ENCODE measurements at regions of chr19 and their contacts with region 1.

Region 1: GRCh38 chr19:9785367-9786331 is 17.1 kb upstream of the ZNF846 start:
- DNase-seq: peak; percentile 92
- H3K4me3 Mint-ChIP-seq: peak overlapping the region; percentile 88
- H3K27ac Mint-ChIP-seq: peak overlapping the region; percentile 86
- H3K4me1 Mint-ChIP-seq: peaks cover 22% of the 10 kb centered on the region
- H3K27me3 Mint-ChIP-seq: no peaks in the 10 kb centered on the region

Region 2: DNA sequence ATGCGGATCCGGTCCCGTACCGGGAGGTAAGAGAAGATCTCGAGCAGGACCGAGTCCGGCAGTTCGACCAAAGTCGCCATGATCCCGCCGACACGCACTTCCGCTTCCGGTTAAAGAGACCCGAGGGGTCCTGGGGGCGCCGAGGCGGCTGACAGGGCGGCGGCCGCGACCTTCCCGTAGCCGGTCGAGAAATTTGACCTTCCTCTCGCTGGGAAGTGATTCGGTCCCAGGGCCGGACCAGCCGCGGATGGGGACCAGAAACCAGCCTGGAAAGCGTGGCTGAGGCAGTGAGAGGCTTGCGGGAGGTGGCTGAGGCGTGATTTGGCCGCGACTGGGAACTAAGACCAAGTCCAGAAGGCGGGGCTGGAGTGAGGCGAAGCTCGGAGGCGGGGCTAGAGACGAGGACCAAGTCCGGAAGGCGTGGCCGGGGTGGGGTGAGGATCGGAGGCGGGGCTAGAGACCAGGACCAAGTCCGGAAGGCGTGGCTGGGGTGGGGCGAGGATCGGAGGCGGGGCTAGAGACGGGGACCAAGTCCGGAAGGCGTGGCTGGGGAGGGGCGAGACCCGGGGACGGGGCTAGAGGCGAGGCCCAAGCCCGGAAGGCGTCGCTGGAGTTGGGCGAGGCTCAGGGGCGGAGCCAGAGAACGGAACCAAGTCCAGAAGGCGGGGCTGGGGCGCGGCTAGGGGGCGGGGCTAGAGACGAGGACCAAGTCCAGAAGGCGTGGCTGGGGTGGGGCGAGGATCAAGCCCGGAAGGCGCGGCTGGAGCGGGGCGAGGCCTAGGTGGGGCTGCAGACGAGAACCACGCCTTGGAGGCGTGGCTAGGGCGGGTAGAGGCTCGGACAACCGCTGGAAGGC is 33.3 kb after region 1 on chr19 and contains the start of gene FBXL12:
- intact Hi-C with region 1: loop called (anchors 1 kb)
- DNase-seq: peak; percentile 100
- H3K4me3 Mint-ChIP-seq: peak within 1 kb of the TSS; percentile 90
- H3K27ac Mint-ChIP-seq: peak within 1 kb of the TSS; percentile 87
- H3K4me1 Mint-ChIP-seq: peaks cover 21% of the 10 kb centered on the region
- H3K27me3 Mint-ChIP-seq: no peaks in the 10 kb centered on the region
- total RNA-seq, gene FBXL12: 23.4 and 23.7 TPM in 2 replicates

Measured in activated T-helper 2 cell treated with anti-CD3 and anti-CD28 coated beads, Interferon-gamma antibody, Interleukin-2, Interleukin-4, amounts not matched to agents 10 μg/mL and 5 μg/mL and 100 μg/mL, durations not matched to agents 14 hours and 24 hours and 36 hours (primary cell).